Naive thymus-derived CD4-positive, alpha-beta T cell (primary cell): ENCODE measurements at regions of chr15 and their contacts with region 1.

Region 1: GRCh38 chr15:69576035-69576526 is 123.5 kb downstream of the RPLP1 start:
- DNase-seq: peak; percentile 38 to 69 (median 58)
- ATAC-seq: peak; percentile 87
- H3K4me3 ChIP-seq: no peak overlapping the region
- H3K4me3 Mint-ChIP-seq: no peak overlapping the region
- H3K27ac ChIP-seq: no peak overlapping the region
- H3K27ac Mint-ChIP-seq: peak overlapping the region in 3 of 9 donors; percentile 23 to 38 (median 24)
- H3K4me1 ChIP-seq: peaks cover 7 to 9% of the 10 kb centered on the region in 2 donors
- H3K4me1 Mint-ChIP-seq: peaks cover 14 to 44% (median 30%) of the 10 kb centered on the region in 7 donors
- H3K27me3 ChIP-seq: no peaks in the 10 kb centered on the region
- H3K27me3 Mint-ChIP-seq: peaks cover 0 to 11% (median 0%) of the 10 kb centered on the region in 5 donors

Region 2: GRCh38 chr15:69719527-69720240 is 143.6 kb after region 1 on chr15:
- CTCF ChIA-PET with region 1: interaction called, 3 read pairs
- POLR2A ChIA-PET with region 1: no interaction called
- intact Hi-C with region 1: loop called (anchors 2 to 5 kb)
- DNase-seq: peak in 7 of 9 donors; percentile 26 to 49 (median 42)
- ATAC-seq: peak; percentile 87
- H3K4me3 ChIP-seq: no peak overlapping the region
- H3K4me3 Mint-ChIP-seq: peak overlapping the region in 9 of 10 donors; percentile 25 to 80 (median 46)
- H3K27ac ChIP-seq: no peak overlapping the region
- H3K27ac Mint-ChIP-seq: peak overlapping the region in 8 of 9 donors; percentile 14 to 96 (median 63)
- H3K4me1 ChIP-seq: peaks cover 62 to 76% of the 10 kb centered on the region in 2 donors
- H3K4me1 Mint-ChIP-seq: peaks cover 63 to 95% (median 88%) of the 10 kb centered on the region in 7 donors
- H3K27me3 ChIP-seq: no peaks in the 10 kb centered on the region
- H3K27me3 Mint-ChIP-seq: peaks cover 0 to 46% (median 0%) of the 10 kb centered on the region in 5 donors

Region 3: GRCh38 chr15:70152070-70152480 is 576.0 kb after region 1 on chr15:
- CTCF ChIA-PET with region 1: no interaction called
- POLR2A ChIA-PET with region 1: no interaction called
- intact Hi-C with region 1: loop called in 1 of 2 experiments (anchors 1 kb)
- DNase-seq: no peak
- ATAC-seq: peak; percentile 63
- H3K4me3 ChIP-seq: no peak overlapping the region
- H3K4me3 Mint-ChIP-seq: no peak overlapping the region
- H3K27ac ChIP-seq: no peak overlapping the region
- H3K27ac Mint-ChIP-seq: peak overlapping the region in 1 of 9 donors; percentile 46
- H3K4me1 ChIP-seq: no peaks in the 10 kb centered on the region
- H3K4me1 Mint-ChIP-seq: peaks cover 0 to 3% (median 0%) of the 10 kb centered on the region in 7 donors
- H3K27me3 ChIP-seq: no peaks in the 10 kb centered on the region
- H3K27me3 Mint-ChIP-seq: peaks cover 0 to 27% (median 6%) of the 10 kb centered on the region in 5 donors

Region 4: DNA sequence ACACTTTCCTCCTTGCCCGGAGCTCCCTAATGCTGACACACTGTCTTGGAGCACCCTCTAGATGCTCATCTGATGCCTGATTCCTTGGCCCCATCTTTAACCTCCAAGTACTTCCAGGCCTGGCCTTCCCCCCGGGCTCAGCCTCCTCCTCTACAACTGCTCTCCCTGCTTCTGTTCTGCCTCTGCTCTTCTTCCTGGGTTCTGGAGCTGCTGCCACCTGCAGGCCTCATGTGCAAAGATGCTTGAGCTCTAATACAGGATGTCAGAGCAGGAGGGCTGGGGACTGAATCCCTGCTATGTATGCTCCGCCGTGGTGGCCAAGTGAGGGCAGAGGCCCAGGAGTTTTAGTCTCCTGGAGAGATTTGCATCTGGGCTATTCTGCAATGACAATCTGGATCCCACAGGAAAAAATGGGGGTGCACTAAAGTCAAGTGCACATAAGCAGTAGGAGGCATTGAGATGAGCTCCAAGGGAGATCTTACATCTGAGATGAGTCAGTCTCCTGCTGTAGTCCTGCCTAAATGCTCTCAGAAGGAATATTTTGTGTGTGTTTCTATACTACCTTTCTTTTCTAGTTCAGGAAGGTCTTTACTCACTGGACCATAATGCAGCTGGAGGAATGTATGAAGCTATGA is 890.9 kb after region 1 on chr15:
- CTCF ChIA-PET with region 1: interaction called, 26 read pairs
- POLR2A ChIA-PET with region 1: no interaction called
- intact Hi-C with region 1: no loop called
- DNase-seq: peak in 6 of 9 donors; percentile 20 to 61 (median 54)
- ATAC-seq: peak; percentile 57
- H3K4me3 ChIP-seq: no peak overlapping the region
- H3K4me3 Mint-ChIP-seq: no peak overlapping the region
- H3K27ac ChIP-seq: no peak overlapping the region
- H3K27ac Mint-ChIP-seq: peak overlapping the region in 1 of 9 donors; percentile 3
- H3K4me1 ChIP-seq: no peaks in the 10 kb centered on the region
- H3K4me1 Mint-ChIP-seq: peaks cover 0 to 13% (median 6%) of the 10 kb centered on the region in 7 donors
- H3K27me3 ChIP-seq: no peaks in the 10 kb centered on the region
- H3K27me3 Mint-ChIP-seq: peaks cover 0 to 81% (median 4%) of the 10 kb centered on the region in 5 donors